ENCODE measurements at regions of chr3 and their contacts with region 1.

Region 1: DNA sequence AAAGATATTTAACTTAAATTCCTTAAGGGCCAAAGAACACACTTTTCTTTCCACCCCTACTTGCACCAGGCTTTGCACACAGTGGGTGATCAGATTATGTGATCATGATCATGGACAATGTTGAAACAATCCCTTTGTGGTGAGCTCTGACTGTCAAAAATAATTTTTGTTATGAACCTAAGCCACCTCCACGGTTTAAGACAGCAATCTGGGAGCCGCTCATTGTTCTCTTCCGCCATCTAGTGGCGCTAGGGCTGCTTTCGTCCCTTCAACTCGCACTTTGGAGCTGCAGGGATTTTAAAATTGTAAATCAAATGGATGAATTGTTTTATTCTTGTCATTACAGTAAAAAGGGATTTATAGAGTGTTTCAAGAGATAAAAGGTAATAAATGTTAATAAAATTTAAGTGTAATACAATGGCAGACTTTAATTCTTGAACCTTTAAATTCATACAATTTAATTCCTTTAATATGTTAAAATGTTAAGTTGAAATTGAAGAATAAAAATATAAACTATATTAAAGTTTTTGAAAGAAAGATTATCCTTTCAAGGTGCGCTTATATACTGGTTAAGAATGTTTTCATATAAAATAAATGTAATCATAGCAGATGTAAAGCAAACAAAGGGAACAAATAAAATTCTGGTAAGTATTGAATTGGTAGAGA is 45.3 kb upstream of the ARL6 start:
- H3K4me3 ChIP-seq: peak overlapping the region; percentile 26
- H3K27ac ChIP-seq: no peak overlapping the region
- H3K4me1 ChIP-seq: peaks cover 2% of the 10 kb centered on the region; the same call in 1 of the 2 replicates
- CTCF ChIP-seq: peak; percentile 22; the same call in 1 of the 2 replicates

Region 2: DNA sequence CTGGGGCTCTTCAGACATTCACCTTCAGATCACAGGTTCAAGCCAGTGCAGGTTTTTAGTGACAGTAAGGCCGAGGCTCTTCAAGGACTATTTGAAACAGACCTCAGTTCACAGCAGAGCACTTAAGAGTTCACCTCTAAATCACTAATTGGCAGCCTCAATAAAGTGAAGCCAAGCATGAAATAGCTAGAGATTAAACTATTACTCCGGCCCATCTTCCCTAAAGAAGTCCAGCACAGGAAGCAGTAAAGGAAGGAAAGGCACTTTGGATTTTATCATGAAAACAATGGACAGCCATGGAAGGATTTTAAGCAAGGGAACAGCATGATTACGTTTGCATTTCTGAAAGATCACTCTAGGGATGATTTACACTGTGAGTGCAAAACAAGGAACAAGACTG is 17.6 kb after region 1 on chr3:
- CTCF ChIA-PET with region 1: interaction called, 10 read pairs
- POLR2A ChIA-PET with region 1: no interaction called
- H3K4me3 ChIP-seq: no peak overlapping the region
- H3K27ac ChIP-seq: no peak overlapping the region
- H3K4me1 ChIP-seq: peaks cover 2% of the 10 kb centered on the region; the same call in 1 of the 2 replicates
- CTCF ChIP-seq: no peak